Heart right ventricle (tissue), 16 donors: ENCODE measurements at regions of chr2 and their contacts with region 1.

Region 1: GRCh38 chr2:162890690-162891311 is 52.2 kb upstream of the KCNH7 start:
- DNase-seq: no peak
- ATAC-seq: no peak
- H3K4me3 ChIP-seq: no peak overlapping the region
- H3K27ac ChIP-seq: no peak overlapping the region
- H3K4me1 ChIP-seq: peaks cover 0 to 3% (median 0%) of the 10 kb centered on the region in 9 donors
- H3K27me3 ChIP-seq: no peaks in the 10 kb centered on the region
- CTCF ChIP-seq: peak in 7 of 9 donors; percentile 27 to 63 (median 41)

Region 2: GRCh38 chr2:162282765-162283425 is 607.9 kb before region 1 on chr2:
- intact Hi-C with region 1: no loop called
- DNase-seq: no peak
- ATAC-seq: peak in 1 of 8 donors; percentile 68
- H3K4me3 ChIP-seq: no peak overlapping the region
- H3K27ac ChIP-seq: peak overlapping the region in 1 of 10 donors; percentile 6
- H3K4me1 ChIP-seq: no peaks in the 10 kb centered on the region
- H3K27me3 ChIP-seq: no peaks in the 10 kb centered on the region
- CTCF ChIP-seq: no peak

Region 3: GRCh38 chr2:163132850-163133249 is 242.0 kb after region 1 on chr2:
- intact Hi-C with region 1: loop called in 1 of 10 experiments (anchors 5 kb)
- DNase-seq: no peak
- ATAC-seq: no peak
- H3K4me3 ChIP-seq: no peak overlapping the region
- H3K27ac ChIP-seq: no peak overlapping the region
- H3K4me1 ChIP-seq: no peaks in the 10 kb centered on the region
- H3K27me3 ChIP-seq: peaks cover 0 to 2% (median 0%) of the 10 kb centered on the region in 7 donors
- CTCF ChIP-seq: peak in 7 of 9 donors; percentile 21 to 52 (median 33)